Thyroid gland (tissue), 4 donors: ENCODE measurements at regions of chr19 and their contacts with region 1.

Region 1: DNA sequence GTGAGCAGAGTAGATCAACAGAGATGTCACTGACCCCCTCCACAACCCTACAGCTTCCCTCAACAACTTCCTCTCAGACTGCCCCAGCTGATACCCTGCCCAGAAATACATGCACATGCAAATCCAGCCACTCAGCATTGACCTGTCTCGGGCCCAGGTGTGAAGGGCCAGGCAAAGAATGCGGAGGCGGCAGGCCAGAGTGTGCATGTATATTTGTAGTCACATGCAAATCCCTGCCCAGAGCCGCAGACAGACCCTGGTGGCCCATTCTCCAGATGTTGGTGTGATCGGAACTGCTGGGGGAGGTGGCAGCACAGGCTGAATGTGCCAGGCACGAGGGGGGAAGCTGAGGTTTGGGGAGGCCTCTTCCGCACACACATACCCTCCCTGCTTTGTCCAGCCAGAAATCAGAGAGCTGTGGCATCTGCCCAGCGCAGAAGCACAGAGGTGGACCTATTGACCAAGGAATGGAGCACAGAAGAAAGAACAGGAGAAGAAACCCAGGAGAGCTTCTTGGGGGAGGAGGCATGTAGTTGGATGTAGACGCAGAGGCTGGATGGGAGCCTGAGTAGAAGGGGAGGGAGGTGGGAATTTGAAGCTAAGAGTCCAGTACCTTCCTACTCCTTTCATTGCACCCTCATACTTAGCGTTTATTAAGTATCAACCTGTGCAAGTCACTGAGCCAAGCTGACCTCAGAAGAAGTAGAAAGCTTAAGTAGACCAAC is 14.4 kb downstream of the MEF2B start:
- DNase-seq: no peak
- H3K4me3 ChIP-seq: no peak overlapping the region
- H3K27ac ChIP-seq: no peak overlapping the region
- H3K4me1 ChIP-seq: no peaks in the 10 kb centered on the region
- H3K27me3 ChIP-seq: no peaks in the 10 kb centered on the region
- CTCF ChIP-seq: no peak
- POLR2A ChIP-seq: no peak

Region 2: DNA sequence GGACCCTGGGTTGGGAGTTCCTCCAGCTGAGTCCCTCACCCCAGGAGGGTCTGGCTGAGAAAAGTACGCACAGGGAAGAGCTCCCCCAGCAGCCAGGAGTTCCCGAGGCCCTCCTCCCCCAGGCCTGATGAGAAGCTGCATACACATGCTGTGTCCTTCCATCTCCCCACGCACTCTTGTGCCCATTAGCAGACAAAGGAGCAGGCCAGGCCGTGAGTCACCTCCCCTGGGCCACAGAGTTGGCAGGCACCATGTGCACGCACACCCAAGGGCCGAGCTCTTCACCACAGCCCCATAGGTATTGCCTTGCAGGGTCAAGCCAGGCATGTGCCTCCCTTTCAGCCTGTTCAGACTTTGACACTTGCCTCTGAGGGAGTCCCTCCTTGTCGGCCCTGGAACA is 182.4 kb after region 1 on chr19:
- intact Hi-C with region 1: loop called (anchors 10 kb)
- DNase-seq: no peak
- H3K4me3 ChIP-seq: no peak overlapping the region
- H3K27ac ChIP-seq: no peak overlapping the region
- H3K4me1 ChIP-seq: no peaks in the 10 kb centered on the region
- H3K27me3 ChIP-seq: no peaks in the 10 kb centered on the region
- CTCF ChIP-seq: no peak
- POLR2A ChIP-seq: no peak